Activated B cell treated with CpG ODN at 0.5 μM for 24 hours (primary cell): ENCODE measurements at regions of chr19 and their contacts with region 1.

Region 1: DNA sequence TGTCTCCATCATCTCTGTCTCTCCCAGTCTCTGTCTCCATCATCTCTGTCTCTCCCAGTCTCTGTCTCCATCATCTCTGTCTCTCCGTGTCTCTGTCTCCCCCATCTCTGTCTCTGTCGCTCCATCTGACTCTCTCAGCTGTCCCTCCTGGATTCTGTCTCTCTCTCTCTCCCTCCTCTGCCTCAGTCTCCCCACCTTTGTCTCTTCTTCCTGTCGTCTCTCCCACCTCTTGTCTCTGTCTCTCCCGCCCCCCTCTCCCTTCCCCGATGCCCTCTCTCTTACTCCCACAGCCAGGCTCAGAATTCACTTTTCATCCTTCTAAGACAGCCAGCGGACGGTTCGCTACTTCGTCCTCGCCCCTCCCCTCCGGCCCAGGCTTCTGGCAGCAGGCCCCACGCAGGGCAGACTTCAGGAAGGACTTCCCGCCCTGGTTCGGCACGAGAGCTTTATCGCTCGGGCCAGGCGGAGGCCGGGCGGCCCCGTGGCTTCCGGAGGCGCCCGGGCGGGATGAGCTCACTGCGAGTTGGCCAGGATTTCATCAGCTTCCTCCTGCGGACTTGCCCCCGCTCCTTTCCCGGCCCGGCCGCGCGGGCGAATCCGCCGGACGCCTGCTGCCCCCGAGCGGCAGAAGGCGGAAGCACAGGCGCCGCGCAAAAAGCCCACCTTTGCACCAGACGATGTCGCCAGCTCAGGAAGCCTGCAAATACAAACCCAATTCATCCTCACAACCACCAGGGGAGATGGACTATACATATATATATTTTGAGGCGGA is 12.4 kb upstream of the CCDC9 start:
- DNase-seq: peak; percentile 92
- ATAC-seq: peak; percentile 70
- H3K4me3 Mint-ChIP-seq: peak overlapping the region; percentile 86
- H3K27ac Mint-ChIP-seq: peak overlapping the region; percentile 90
- H3K4me1 Mint-ChIP-seq: peaks cover 29% of the 10 kb centered on the region
- H3K27me3 Mint-ChIP-seq: peaks cover 7% of the 10 kb centered on the region
- CTCF ChIP-seq: peak; percentile 47

Region 2: GRCh38 chr19:47013041-47013517 is 230.9 kb before region 1 on chr19:
- CTCF ChIA-PET with region 1: interaction called, 12 read pairs
- POLR2A ChIA-PET with region 1: interaction called, 5 read pairs
- intact Hi-C with region 1: loop called (anchors 1 kb)
- DNase-seq: peak; percentile 69
- ATAC-seq: peak; percentile 82
- H3K4me3 Mint-ChIP-seq: no peak overlapping the region
- H3K27ac Mint-ChIP-seq: no peak overlapping the region
- H3K4me1 Mint-ChIP-seq: peaks cover 8% of the 10 kb centered on the region
- H3K27me3 Mint-ChIP-seq: peaks cover 7% of the 10 kb centered on the region
- CTCF ChIP-seq: peak; percentile 99

Region 3: DNA sequence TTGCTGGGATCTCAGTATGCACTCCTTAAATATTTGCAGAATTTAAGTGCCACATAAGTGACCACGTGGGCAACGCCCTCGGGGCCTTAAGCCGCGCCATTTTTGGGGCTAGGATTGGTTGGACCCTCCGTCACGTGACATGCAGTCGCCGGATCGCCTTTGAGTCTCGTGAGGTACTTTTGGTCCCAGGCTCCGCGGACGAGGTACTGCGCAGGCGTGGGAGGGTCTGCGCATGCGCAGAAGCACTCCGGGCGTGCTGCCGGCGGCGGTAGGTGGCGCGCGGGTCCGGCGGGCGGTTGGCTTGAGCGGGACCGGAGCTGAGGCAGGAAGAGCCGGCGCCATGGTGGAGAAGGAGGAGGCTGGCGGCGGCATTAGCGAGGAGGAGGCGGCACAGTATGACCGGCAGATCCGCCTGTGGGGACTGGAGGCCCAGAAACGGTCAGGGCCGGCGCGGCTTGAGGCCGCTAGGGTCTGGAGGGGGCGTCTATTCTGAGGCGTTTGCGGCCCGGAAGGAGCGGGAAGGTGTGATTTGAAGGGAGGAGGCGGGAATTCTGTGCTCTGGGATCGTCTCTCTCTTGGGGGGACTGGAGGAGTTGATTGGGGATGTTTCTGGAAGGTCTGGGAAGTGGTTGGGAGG is 113.3 kb before region 1 on chr19 and contains the start of gene SAE1:
- CTCF ChIA-PET with region 1: interaction called, 18 read pairs
- POLR2A ChIA-PET with region 1: interaction called, 13 read pairs
- intact Hi-C with region 1: loop called (anchors 1 kb)
- DNase-seq: peak; percentile 94
- ATAC-seq: peak; percentile 89
- H3K4me3 Mint-ChIP-seq: peak within 1 kb of the TSS; percentile 99
- H3K27ac Mint-ChIP-seq: peak within 1 kb of the TSS; percentile 94
- H3K4me1 Mint-ChIP-seq: peaks cover 44% of the 10 kb centered on the region
- H3K27me3 Mint-ChIP-seq: no peaks in the 10 kb centered on the region
- CTCF ChIP-seq: no peak
- total RNA-seq, gene SAE1: 64.5 and 67.4 TPM in 2 replicates

Region 4: DNA sequence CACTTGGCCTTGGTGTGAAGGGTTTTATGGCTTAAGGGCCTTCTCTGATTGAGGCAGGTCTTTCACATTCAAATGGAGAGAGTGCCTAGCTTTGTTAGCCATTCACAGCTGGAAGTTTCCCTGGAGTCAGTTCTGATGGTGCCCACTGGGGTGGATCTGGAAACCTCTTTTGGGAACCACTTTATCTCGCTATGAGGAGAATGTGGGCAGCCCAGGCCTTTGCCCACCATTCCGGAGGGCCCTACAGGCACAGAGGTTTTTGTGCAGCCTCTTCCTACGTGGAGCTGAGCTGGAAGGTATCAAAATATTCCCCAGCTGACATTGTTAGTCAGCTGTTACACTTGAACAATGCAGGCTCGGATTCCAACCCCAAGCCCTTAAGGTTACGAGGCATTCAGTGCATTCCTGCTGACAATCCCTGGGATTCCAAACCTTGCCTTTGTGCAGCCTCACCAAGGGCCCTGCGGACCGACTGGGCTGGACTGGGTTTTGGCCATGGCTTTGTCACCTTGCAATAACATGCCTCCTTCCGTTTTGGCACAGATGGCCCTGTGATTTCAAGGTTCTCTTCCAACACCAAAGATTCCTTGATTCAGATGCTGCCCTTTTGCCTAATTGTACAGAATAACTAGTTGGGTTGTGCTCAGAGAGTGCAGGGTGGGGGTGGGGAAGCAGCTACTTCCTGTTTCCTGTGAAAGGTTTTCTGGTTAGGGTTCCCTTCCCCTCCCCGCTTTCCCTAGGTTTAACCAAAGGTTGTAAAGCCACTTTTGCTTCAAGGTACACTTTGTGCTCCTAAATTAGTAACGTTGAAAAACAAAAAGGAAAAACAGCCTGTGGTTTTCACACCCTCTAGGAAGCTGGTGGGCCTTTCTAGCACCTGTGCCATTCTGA is 86.3 kb before region 1 on chr19:
- CTCF ChIA-PET with region 1: interaction called, 17 read pairs
- POLR2A ChIA-PET with region 1: interaction called, 5 read pairs
- intact Hi-C with region 1: no loop called
- DNase-seq: no peak
- ATAC-seq: peak; percentile 47
- H3K4me3 Mint-ChIP-seq: peak overlapping the region; percentile 41
- H3K27ac Mint-ChIP-seq: peak overlapping the region; percentile 75
- H3K4me1 Mint-ChIP-seq: peaks cover 32% of the 10 kb centered on the region
- H3K27me3 Mint-ChIP-seq: no peaks in the 10 kb centered on the region
- CTCF ChIP-seq: no peak

Region 5: DNA sequence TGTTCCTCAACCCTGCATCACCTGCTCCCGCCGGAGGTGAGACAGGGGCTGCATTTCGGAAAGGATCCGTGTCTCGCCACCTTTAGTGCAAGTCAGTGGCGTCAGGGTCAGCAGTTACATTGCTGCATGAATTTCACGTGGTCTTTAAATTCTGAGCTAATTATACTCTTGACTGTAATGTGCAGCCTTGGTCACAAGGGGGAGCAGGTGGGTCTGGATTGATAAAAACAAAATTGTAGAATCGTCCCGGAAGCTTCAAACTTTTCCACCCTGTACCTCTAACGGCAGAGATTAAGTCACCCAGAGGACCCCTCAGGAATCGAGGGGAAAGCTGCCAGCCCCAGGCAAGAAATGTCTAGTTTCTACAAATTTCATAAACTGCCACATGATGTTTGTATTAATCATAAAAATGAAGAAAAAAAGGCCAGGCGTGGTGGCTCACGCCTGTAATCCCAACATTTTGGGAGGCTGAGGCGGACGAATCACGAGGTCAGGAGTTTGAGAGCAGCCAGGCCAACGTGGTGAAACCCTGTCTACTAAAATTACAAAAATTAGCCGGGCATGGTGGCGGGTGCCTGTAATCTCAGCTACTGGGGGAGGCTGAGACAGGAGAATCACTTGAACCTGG is 33.2 kb before region 1 on chr19:
- CTCF ChIA-PET with region 1: interaction called, 378 read pairs
- POLR2A ChIA-PET with region 1: interaction called, 156 read pairs
- intact Hi-C with region 1: loop called (anchors 1 kb)
- DNase-seq: peak; percentile 53
- ATAC-seq: peak; percentile 94
- H3K4me3 Mint-ChIP-seq: no peak overlapping the region
- H3K27ac Mint-ChIP-seq: peak overlapping the region; percentile 87
- H3K4me1 Mint-ChIP-seq: peaks cover 9% of the 10 kb centered on the region
- H3K27me3 Mint-ChIP-seq: no peaks in the 10 kb centered on the region
- CTCF ChIP-seq: peak; percentile 83

Region 6: DNA sequence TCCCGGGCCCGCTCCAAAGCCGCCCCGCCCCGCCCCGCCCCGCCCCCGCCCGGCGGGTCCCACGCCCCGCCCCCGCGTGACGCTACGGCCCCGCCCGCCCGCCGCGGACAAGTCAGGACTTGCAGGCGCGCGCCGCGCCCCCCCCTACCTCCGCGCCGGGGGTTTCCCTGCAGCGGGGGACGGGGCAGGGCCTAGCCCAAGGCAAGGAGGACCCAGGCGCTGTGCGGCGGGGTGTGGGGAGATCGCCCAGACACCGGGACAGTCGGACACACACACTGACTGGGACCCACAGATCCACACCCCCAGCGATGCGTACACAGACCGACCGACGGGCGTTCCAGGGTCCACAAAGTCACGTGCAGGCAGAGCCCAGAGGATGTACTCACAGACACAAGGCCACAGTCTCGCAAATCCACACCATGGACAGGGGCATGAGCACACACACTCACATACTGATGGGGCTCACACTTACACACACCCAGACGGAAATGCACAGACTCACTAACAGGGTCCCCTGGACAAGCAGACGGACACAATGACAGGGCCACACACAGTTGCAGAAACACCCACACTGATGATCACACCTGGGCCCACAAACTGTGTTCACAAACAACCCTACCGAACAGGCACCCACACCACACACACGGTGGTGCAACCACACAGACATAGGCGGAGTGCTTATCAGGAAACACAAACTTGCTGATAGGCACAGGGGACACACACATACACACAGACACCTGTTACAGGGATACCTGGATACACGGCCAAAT is 12.6 kb before region 1 on chr19:
- CTCF ChIA-PET with region 1: interaction called, 51 read pairs
- POLR2A ChIA-PET with region 1: interaction called, 152 read pairs
- intact Hi-C with region 1: loop called (anchors 1 kb)
- DNase-seq: peak; percentile 86
- ATAC-seq: peak; percentile 63
- H3K4me3 Mint-ChIP-seq: peak overlapping the region; percentile 67
- H3K27ac Mint-ChIP-seq: peak overlapping the region; percentile 71
- H3K4me1 Mint-ChIP-seq: peaks cover 30% of the 10 kb centered on the region
- H3K27me3 Mint-ChIP-seq: no peaks in the 10 kb centered on the region
- CTCF ChIP-seq: no peak

Region 7: GRCh38 chr19:47273313-47273977 is 29.5 kb after region 1 on chr19:
- CTCF ChIA-PET with region 1: interaction called, 7 read pairs
- POLR2A ChIA-PET with region 1: interaction called, 16 read pairs
- intact Hi-C with region 1: no loop called
- DNase-seq: peak; percentile 83
- ATAC-seq: peak; percentile 54
- H3K4me3 Mint-ChIP-seq: peak overlapping the region; percentile 96
- H3K27ac Mint-ChIP-seq: peak overlapping the region; percentile 97
- H3K4me1 Mint-ChIP-seq: peaks cover 27% of the 10 kb centered on the region
- H3K27me3 Mint-ChIP-seq: no peaks in the 10 kb centered on the region
- CTCF ChIP-seq: no peak